Activated T-helper 1 cell treated with anti-CD3 and anti-CD28 coated beads, Interleukin-12 subunit alpha, Interleukin-12 subunit beta, Interleukin-2, Interleukin-4 antibody, amounts not matched to agents 30 ng/mL and 10 ng/mL and 1 ng/mL, durations not matched to agents 14 hours and 24 hours and 36 hours (primary cell): ENCODE measurements at regions of chr2 and their contacts with region 1.

Region 1: DNA sequence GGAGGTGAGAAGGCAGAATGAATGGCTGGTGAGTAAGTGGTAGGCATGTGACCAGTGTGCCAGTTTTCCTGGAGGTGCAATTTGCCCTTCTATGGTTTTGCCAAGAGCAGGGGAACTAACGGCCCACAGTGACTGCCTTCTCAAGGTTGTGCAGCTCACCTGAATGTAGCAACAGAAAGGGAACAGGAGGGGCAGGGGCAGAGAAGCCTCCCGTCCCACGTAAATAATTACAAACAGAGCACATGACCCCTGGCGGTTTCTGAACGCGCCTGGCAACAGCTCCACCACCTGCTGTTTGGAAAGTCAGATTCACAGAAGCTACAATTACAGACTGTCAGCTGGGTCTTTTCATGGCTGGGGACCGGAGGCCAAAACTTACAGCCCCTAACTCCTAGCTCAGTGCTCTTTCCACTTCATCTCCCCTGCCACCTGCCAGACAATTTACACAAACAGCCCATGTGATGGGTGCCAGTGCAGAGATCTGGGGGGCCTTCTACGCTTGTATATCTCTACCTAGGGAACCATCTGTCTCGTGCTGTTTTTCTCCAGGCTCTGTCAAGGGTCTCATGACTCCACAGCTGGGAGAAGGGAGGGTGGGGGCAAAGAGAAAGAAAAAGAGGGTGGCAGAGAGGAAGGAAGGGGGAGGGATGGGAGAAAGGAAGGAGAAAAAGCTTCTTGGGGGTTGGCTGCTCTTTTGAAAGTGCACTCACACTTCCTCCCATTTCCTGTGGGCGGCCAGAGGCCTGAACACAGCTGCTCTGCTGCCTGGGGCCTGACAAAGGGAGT is 69.6 kb downstream of the POLR1A start:
- DNase-seq: peak; percentile 65
- H3K4me3 Mint-ChIP-seq: peak overlapping the region; percentile 76
- H3K27ac Mint-ChIP-seq: peak overlapping the region; percentile 93
- H3K4me1 Mint-ChIP-seq: peaks cover 74% of the 10 kb centered on the region
- H3K27me3 Mint-ChIP-seq: no peaks in the 10 kb centered on the region

Region 2: GRCh38 chr2:85707304-85707703 is 328.8 kb before region 1 on chr2:
- intact Hi-C with region 1: loop called (anchors 5 kb)
- DNase-seq: peak; percentile 76
- H3K4me3 Mint-ChIP-seq: peak overlapping the region; percentile 50
- H3K27ac Mint-ChIP-seq: peak overlapping the region; percentile 94
- H3K4me1 Mint-ChIP-seq: peaks cover 79% of the 10 kb centered on the region
- H3K27me3 Mint-ChIP-seq: no peaks in the 10 kb centered on the region

Region 3: GRCh38 chr2:85852937-85853498 is 183.1 kb before region 1 on chr2:
- intact Hi-C with region 1: loop called (anchors 1 kb)
- DNase-seq: peak; percentile 46
- H3K4me3 Mint-ChIP-seq: peak overlapping the region; percentile 82
- H3K27ac Mint-ChIP-seq: peak overlapping the region; percentile 99
- H3K4me1 Mint-ChIP-seq: peaks cover 58% of the 10 kb centered on the region
- H3K27me3 Mint-ChIP-seq: no peaks in the 10 kb centered on the region

Region 4: GRCh38 chr2:85933753-85934594 is 102.1 kb before region 1 on chr2:
- intact Hi-C with region 1: loop called (anchors 5 kb)
- DNase-seq: no peak
- H3K4me3 Mint-ChIP-seq: no peak overlapping the region
- H3K27ac Mint-ChIP-seq: no peak overlapping the region
- H3K4me1 Mint-ChIP-seq: peaks cover 20% of the 10 kb centered on the region
- H3K27me3 Mint-ChIP-seq: no peaks in the 10 kb centered on the region

Region 5: DNA sequence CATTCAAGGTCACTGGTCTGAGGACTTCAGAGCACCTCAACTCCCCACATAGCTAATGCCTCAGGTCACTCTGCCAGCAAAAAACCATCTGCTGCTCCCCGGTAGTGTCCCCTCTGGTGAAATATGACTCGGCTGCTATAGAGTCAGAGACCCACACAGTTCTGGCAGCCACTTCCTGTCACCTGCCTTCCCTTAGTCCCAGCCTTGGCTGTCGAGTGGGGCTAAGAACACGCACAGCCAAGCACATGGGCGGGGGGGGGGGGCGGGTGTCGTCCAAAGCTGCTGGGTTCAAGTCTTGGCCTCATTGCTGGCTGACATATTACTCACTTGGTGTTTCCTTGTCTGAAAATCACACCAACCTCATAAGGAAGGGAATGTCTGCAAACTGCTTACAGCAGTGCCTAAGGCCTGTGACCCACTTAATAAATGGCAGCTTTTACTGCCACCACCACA is 32.1 kb after region 1 on chr2:
- intact Hi-C with region 1: loop called (anchors 2 kb)
- DNase-seq: peak; percentile 25
- H3K4me3 Mint-ChIP-seq: no peak overlapping the region
- H3K27ac Mint-ChIP-seq: peak overlapping the region; percentile 10
- H3K4me1 Mint-ChIP-seq: peaks cover 36% of the 10 kb centered on the region
- H3K27me3 Mint-ChIP-seq: no peaks in the 10 kb centered on the region

Region 6: DNA sequence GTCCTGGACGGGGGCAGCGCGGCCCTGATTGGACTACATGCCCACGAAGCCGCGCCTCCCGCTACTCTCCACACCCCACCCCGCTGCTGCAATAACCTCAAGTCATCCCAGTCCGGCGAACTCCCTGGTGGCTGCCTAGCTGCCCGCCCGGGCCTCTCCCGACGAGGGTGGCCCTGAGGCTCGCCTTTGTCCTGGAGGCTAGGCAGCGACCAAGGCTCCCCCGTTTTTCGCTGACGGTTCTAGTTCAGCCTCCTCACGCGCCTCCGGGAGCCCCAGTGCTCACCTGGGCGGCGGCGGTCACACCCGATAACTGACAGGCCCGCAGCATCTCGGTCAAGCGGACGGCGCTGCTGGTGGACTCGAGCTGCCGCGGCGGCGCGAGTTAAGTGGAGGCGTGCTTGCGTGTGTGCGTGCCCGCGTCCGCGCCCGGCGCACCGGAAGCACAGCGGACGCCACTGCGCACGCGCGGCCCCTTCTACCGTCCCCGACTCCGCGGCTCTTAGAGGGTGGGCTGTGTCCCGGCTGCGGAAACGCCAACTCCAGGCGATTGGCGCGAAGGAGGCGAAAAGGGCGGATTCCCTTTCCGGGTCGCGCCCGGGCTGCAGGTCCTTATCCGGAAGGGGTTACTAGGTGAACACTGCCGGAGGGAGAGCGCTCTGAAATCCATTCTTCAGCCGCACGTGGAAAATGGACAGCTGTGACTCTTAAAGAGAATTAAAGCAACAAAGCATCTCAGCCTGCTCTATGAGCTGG is 159.2 kb after region 1 on chr2 and contains the start of gene IMMT:
- intact Hi-C with region 1: loop called (anchors 5 kb)
- DNase-seq: peak; percentile 93
- H3K4me3 Mint-ChIP-seq: peak within 1 kb of the TSS; percentile 99
- H3K27ac Mint-ChIP-seq: peak within 1 kb of the TSS; percentile 93
- H3K4me1 Mint-ChIP-seq: peaks cover 45% of the 10 kb centered on the region
- H3K27me3 Mint-ChIP-seq: no peaks in the 10 kb centered on the region
- total RNA-seq, gene IMMT: 164 and 166 TPM in 2 replicates

Region 7: GRCh38 chr2:86453836-86454235 is 417.8 kb after region 1 on chr2:
- intact Hi-C with region 1: no loop called
- DNase-seq: no peak
- H3K4me3 Mint-ChIP-seq: no peak overlapping the region
- H3K27ac Mint-ChIP-seq: no peak overlapping the region
- H3K4me1 Mint-ChIP-seq: peaks cover 29% of the 10 kb centered on the region
- H3K27me3 Mint-ChIP-seq: no peaks in the 10 kb centered on the region

Region 8: DNA sequence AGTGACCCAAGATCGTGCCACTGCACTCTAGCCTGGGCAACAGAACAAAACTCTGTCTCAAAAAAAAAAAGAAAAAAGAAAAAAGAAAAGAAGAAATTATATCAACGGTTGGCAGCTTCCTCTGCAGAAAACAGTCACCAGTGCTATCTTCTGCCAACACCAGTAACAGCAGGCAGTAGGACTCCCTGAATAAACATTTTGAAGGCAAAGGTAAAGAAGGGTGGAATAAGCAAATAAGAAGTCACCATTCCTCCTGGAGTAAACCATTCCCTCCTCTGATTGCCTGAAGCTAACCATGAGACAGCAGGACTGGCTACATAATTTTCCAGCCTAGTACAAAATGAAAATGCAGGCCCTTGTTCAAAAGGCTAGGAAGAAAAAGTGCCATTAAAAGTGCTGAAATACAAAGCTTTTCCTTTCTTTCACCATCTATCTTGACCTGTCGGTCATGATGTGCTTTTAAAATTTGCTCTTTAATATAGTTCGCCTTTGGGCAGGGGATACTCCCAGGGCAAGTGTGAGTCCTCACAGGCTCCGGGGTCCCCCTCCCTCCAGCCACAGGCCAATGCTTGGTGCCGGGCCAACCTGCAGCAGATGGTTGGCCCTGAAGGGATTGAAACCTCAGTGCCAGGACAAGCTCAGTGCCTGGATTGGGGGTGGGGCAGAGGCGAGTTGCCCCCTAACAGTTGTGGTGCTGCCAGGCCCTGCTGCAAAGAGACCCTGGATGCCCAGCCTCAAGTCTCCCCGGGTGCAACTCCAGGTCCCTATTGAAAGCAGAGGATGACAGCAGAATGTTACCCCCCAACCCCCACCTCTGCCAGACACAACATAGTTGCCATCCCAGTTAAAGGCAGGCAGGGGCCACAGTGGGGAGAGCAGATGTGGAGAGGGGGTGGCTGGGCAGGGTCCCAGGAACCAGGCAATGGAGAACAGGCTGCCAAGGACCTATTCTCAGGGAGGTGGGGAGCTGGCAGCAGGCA is 596.9 kb after region 1 on chr2:
- intact Hi-C with region 1: no loop called
- DNase-seq: no peak
- H3K4me3 Mint-ChIP-seq: no peak overlapping the region
- H3K27ac Mint-ChIP-seq: no peak overlapping the region
- H3K4me1 Mint-ChIP-seq: no peaks in the 10 kb centered on the region
- H3K27me3 Mint-ChIP-seq: peaks cover 11% of the 10 kb centered on the region